Dendritic cell treated with granulocyte-macrophage colony-stimulating factor and Interleukin-4, amounts not matched to agents 40 ng/mL and 50 ng/mL, for 4 days (primary cell): ENCODE measurements at regions of chr19 and their contacts with region 1.

Region 1: GRCh38 chr19:1113033-1113985 is 9.5 kb downstream of the GPX4 start:
- H3K4me3 Mint-ChIP-seq: no peak overlapping the region
- H3K27ac Mint-ChIP-seq: peak overlapping the region; percentile 67
- H3K4me1 Mint-ChIP-seq: peaks cover 34% of the 10 kb centered on the region
- H3K27me3 Mint-ChIP-seq: no peaks in the 10 kb centered on the region

Region 2: DNA sequence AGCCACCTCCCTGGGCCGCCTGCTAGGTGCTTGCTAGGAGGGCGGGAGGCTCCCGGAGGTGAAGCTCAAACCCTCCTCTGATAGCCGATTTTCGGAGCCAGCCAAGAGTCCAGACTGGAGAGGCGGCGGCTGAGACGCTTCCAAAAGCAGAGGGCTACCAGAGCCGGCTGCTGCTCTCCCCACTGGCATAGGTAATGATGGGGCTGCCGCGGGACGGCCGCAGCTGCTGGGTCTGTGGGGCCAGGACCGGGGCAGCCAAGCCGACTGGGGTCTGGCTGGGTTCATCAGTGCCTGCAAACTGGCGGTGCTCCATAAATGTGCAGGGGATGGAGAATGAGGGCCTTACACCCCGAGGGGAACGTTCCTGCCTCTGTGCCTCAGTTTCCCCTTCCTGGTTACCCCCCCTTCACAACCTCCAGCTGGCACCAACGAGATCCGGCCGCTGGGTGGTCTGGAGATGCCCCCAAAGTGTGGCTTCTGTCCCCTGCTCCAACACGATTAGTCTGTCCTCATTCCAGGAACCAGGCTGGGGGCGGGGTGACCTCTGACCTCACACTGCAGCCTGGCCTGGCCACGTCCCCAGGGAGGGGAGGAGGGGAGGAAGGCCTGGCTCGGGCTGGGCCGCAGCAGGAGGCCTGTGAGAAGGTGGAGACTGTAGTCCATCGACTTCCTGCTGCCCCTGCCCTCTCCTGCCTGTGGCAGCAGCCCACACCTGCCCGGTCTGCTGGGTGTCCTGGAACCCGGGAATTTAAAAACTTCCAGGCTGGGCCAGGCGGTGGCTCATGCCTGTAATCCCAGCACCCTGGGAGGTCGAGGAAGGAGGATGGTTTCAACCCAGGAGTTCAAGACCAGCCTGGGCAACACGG is 132.9 kb before region 1 on chr19:
- intact Hi-C with region 1: no loop called
- H3K4me3 Mint-ChIP-seq: peak overlapping the region; percentile 17
- H3K27ac Mint-ChIP-seq: peak overlapping the region; percentile 60
- H3K4me1 Mint-ChIP-seq: peaks cover 35% of the 10 kb centered on the region
- H3K27me3 Mint-ChIP-seq: no peaks in the 10 kb centered on the region

Region 3: GRCh38 chr19:1045247-1045603 is 68.1 kb before region 1 on chr19:
- intact Hi-C with region 1: no loop called
- H3K4me3 Mint-ChIP-seq: no peak overlapping the region
- H3K27ac Mint-ChIP-seq: no peak overlapping the region
- H3K4me1 Mint-ChIP-seq: peaks cover 15% of the 10 kb centered on the region
- H3K27me3 Mint-ChIP-seq: no peaks in the 10 kb centered on the region

Region 4: GRCh38 chr19:1189419-1189818 is 76.1 kb after region 1 on chr19:
- intact Hi-C with region 1: loop called (anchors 5 kb)
- H3K4me3 Mint-ChIP-seq: no peak overlapping the region
- H3K27ac Mint-ChIP-seq: peak overlapping the region; percentile 75
- H3K4me1 Mint-ChIP-seq: peaks cover 33% of the 10 kb centered on the region
- H3K27me3 Mint-ChIP-seq: peaks cover 2% of the 10 kb centered on the region